Posterior vena cava (tissue), 2 donors: ENCODE measurements at regions of chr7 and their contacts with region 1.

Region 1: DNA sequence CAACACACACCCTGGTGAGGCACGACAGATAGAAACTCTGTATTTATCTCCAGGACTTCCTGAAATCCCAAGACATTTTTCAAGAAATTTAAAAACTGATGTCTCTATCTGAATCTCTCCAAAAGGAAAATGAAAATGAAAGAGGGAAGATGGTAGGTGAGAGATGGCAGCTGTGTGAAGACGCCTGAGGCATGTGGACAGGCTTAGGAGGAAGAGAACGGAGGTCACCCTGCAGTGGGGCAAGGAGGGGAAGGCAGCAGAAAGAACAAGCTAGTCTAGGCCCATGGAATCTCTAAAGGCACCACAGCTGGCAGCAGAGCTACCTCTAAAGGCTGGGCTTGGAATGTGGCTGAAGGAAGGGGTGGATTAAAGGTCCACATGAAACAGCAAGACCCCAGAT is 64.7 kb upstream of the EGFR start:
- DNase-seq: no peak

Region 2: GRCh38 chr7:54589695-54590094 is 364.5 kb before region 1 on chr7:
- intact Hi-C with region 1: loop called in 1 of 2 experiments (anchors 5 kb)
- DNase-seq: no peak